ENCODE measurements at regions of chr1 and their contacts with region 1.

Region 1: GRCh38 chr1:32072622-32073298 is at the start of gene TMEM39B:
- DNase-seq: peak; percentile 90 to 97 (median 96)
- ATAC-seq: peak; percentile 92
- H3K4me3 ChIP-seq: peak within 1 kb of the TSS; percentile 98
- H3K4me3 Mint-ChIP-seq: peak within 1 kb of the TSS; percentile 83 to 94 (median 91)
- H3K27ac ChIP-seq: peak within 1 kb of the TSS; percentile 82
- H3K27ac Mint-ChIP-seq: peak within 1 kb of the TSS; percentile 84 to 95 (median 92)
- H3K4me1 ChIP-seq: peaks cover 5 to 16% of the 10 kb centered on the region in 2 donors
- H3K4me1 Mint-ChIP-seq: peaks cover 21 to 58% (median 47%) of the 10 kb centered on the region in 7 donors
- H3K27me3 ChIP-seq: no peaks in the 10 kb centered on the region
- H3K27me3 Mint-ChIP-seq: no peaks in the 10 kb centered on the region
- total RNA-seq, gene TMEM39B: 11.4 to 35.9 (median 26.4) TPM

Region 2: DNA sequence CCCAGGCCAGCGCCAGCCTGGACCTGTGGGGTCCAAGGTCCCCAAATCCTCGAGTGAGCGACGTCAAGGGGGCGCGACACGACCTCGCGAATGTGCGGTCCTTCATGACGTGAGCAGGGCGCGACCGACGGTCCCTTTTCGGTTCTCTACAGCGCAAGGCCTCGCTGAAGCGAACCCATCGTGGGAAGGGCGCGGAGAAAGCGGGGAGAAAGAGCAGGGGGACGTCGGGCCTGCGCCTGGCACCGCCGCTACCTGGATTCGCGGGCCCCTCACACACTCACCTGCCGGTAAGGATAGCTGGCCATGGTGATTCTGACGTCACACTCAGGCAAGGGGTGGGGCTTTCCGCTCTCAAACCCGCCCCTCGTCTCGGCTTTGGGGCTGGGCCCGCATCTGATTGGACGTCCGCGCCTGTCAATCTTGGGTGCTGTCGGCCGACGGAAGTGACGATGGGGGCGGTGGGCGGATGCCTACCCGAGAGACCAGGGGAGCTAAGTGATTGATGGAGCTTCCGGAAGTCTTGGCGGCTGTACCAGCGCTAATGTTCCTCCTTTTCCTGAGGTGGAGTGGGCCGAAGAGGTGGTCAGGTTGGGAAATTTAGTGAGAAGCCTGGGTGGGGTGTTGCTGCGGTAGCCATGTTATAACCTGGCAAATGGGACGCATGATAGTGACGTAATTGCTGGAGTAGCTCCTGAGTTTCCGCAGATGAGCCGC is 428.0 kb before region 1 on chr1 and contains the start of gene PEF1:
- CTCF ChIA-PET with region 1: no interaction called
- POLR2A ChIA-PET with region 1: no interaction called
- intact Hi-C with region 1: loop called (anchors 2 kb)
- DNase-seq: peak; percentile 97 to 100 (median 99)
- ATAC-seq: peak; percentile 94
- H3K4me3 ChIP-seq: peak within 1 kb of the TSS; percentile 91
- H3K4me3 Mint-ChIP-seq: peak within 1 kb of the TSS; percentile 92 to 100 (median 98)
- H3K27ac ChIP-seq: peak within 1 kb of the TSS; percentile 98
- H3K27ac Mint-ChIP-seq: peak within 1 kb of the TSS; percentile 98 to 100 (median 99)
- H3K4me1 ChIP-seq: peaks cover 27 to 30% of the 10 kb centered on the region in 2 donors
- H3K4me1 Mint-ChIP-seq: peaks cover 18 to 47% (median 40%) of the 10 kb centered on the region in 7 donors
- H3K27me3 ChIP-seq: no peaks in the 10 kb centered on the region
- H3K27me3 Mint-ChIP-seq: no peaks in the 10 kb centered on the region
- total RNA-seq, gene PEF1: 37.7 to 49.8 (median 40.8) TPM

Region 3: GRCh38 chr1:32107742-32108661 is 35.2 kb after region 1 on chr1 and contains the start of gene KPNA6:
- CTCF ChIA-PET with region 1: interaction called, 16 read pairs
- POLR2A ChIA-PET with region 1: interaction called, 43 read pairs
- intact Hi-C with region 1: loop called (anchors 1 kb)
- DNase-seq: peak; percentile 75 to 95 (median 93)
- ATAC-seq: peak; percentile 94
- H3K4me3 ChIP-seq: peak within 1 kb of the TSS; percentile 75
- H3K4me3 Mint-ChIP-seq: peak within 1 kb of the TSS; percentile 95 to 100 (median 99)
- H3K27ac ChIP-seq: peak within 1 kb of the TSS; percentile 94
- H3K27ac Mint-ChIP-seq: peak within 1 kb of the TSS; percentile 93 to 99 (median 98)
- H3K4me1 ChIP-seq: peaks cover 37 to 40% of the 10 kb centered on the region in 2 donors
- H3K4me1 Mint-ChIP-seq: peaks cover 27 to 63% (median 47%) of the 10 kb centered on the region in 7 donors
- H3K27me3 ChIP-seq: no peaks in the 10 kb centered on the region
- H3K27me3 Mint-ChIP-seq: no peaks in the 10 kb centered on the region
- total RNA-seq, gene KPNA6: 47.4 to 63.7 (median 51.6) TPM

Region 4: GRCh38 chr1:32200226-32201010 is 127.7 kb after region 1 on chr1 and contains the start of gene CCDC28B:
- CTCF ChIA-PET with region 1: no interaction called
- POLR2A ChIA-PET with region 1: interaction called, 5 read pairs
- intact Hi-C with region 1: loop called in 1 of 2 experiments (anchors 1 kb)
- DNase-seq: peak; percentile 35 to 71 (median 62)
- ATAC-seq: peak; percentile 59
- H3K4me3 ChIP-seq: peak within 1 kb of the TSS; percentile 96
- H3K4me3 Mint-ChIP-seq: peak within 1 kb of the TSS; percentile 78 to 99 (median 94)
- H3K27ac ChIP-seq: peak within 1 kb of the TSS; percentile 99
- H3K27ac Mint-ChIP-seq: peak within 1 kb of the TSS; percentile 72 to 98 (median 91)
- H3K4me1 ChIP-seq: peaks cover 32 to 35% of the 10 kb centered on the region in 2 donors
- H3K4me1 Mint-ChIP-seq: peaks cover 41 to 73% (median 60%) of the 10 kb centered on the region in 7 donors
- H3K27me3 ChIP-seq: no peaks in the 10 kb centered on the region
- H3K27me3 Mint-ChIP-seq: no peaks in the 10 kb centered on the region
- total RNA-seq, gene CCDC28B: 6.2 to 39.0 (median 8.7) TPM

Region 5: GRCh38 chr1:32351399-32352238 is 278.9 kb after region 1 on chr1:
- CTCF ChIA-PET with region 1: no interaction called
- POLR2A ChIA-PET with region 1: no interaction called
- intact Hi-C with region 1: loop called (anchors 1 kb)
- DNase-seq: peak; percentile 83 to 93 (median 92)
- ATAC-seq: peak; percentile 97
- H3K4me3 ChIP-seq: peak overlapping the region; percentile 62
- H3K4me3 Mint-ChIP-seq: peak overlapping the region; percentile 68 to 90 (median 85)
- H3K27ac ChIP-seq: peak overlapping the region; percentile 75
- H3K27ac Mint-ChIP-seq: peak overlapping the region; percentile 63 to 96 (median 91)
- H3K4me1 ChIP-seq: peaks cover 4 to 19% of the 10 kb centered on the region in 2 donors
- H3K4me1 Mint-ChIP-seq: peaks cover 35 to 65% (median 53%) of the 10 kb centered on the region in 7 donors
- H3K27me3 ChIP-seq: no peaks in the 10 kb centered on the region
- H3K27me3 Mint-ChIP-seq: peaks cover 0 to under 1% (median 0%) of the 10 kb centered on the region in 5 donors